B cell (primary cell): ENCODE measurements at regions of chr17 and their contacts with region 1.

Region 1: GRCh38 chr17:73156166-73156840 is 8.5 kb upstream of the SSTR2 start:
- DNase-seq: peak; percentile 61
- ATAC-seq: peak; percentile 67
- H3K4me3 ChIP-seq: no peak overlapping the region
- H3K4me3 Mint-ChIP-seq: no peak overlapping the region
- H3K27ac ChIP-seq: no peak overlapping the region
- H3K27ac Mint-ChIP-seq: no peak overlapping the region
- H3K4me1 ChIP-seq: peaks cover 5 to 13% of the 10 kb centered on the region in 2 donors
- H3K4me1 Mint-ChIP-seq: peaks cover 11% of the 10 kb centered on the region
- H3K27me3 ChIP-seq: peaks cover 0 to 30% (median 8%) of the 10 kb centered on the region in 4 experiments
- H3K27me3 Mint-ChIP-seq: peaks cover 31% of the 10 kb centered on the region
- CTCF ChIP-seq: peak; percentile 84

Region 2: GRCh38 chr17:72556944-72557826 is 599.1 kb before region 1 on chr17:
- CTCF ChIA-PET with region 1: interaction called, 5 read pairs
- POLR2A ChIA-PET with region 1: no interaction called
- intact Hi-C with region 1: loop called (anchors 5 kb)
- DNase-seq: peak; percentile 51
- ATAC-seq: peak; percentile 56
- H3K4me3 ChIP-seq: no peak overlapping the region
- H3K4me3 Mint-ChIP-seq: no peak overlapping the region
- H3K27ac ChIP-seq: no peak overlapping the region
- H3K27ac Mint-ChIP-seq: no peak overlapping the region
- H3K4me1 ChIP-seq: no peaks in the 10 kb centered on the region
- H3K4me1 Mint-ChIP-seq: no peaks in the 10 kb centered on the region
- H3K27me3 ChIP-seq: no peaks in the 10 kb centered on the region
- H3K27me3 Mint-ChIP-seq: peaks cover 4% of the 10 kb centered on the region
- CTCF ChIP-seq: peak; percentile 74

Region 3: DNA sequence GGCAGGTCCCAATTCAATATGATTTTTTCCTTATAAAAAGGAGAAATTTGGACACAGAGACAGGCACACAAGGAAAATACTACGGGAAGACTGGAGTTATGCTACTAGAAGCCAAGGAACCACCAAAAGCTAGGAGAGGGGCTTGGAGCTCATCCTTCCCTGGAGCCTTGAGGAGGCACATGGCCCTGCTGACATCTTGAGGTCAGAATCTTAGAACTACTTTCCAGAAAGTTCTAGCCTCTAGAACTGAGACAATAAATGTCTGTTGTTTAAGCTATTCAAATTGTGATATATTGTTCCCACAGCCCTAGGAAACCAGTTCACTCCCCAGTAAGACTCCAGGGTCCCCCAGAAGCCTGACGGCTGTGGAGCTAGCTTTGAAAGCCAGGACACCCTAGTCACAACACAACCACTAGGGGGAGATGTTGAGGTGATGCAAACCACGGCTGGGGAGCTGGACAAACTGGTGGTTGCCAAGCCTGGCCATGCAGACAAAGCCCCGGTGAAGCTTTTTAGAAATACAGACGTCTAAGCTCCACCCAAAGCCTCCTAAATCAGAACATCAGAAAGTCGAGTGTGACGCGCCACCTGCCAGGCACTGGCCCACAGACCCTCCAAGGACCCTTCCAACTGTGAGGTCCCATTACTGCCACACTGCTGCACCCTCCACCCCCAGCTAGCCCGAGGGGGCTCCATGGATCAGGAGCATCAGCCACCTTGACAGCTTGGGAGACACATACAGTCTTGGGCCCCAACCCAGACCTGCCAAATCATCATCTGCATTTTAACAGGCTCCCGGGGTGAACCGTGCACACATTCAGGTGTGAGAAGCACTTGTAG is 170.2 kb before region 1 on chr17:
- CTCF ChIA-PET with region 1: interaction called, 32 read pairs
- POLR2A ChIA-PET with region 1: no interaction called
- intact Hi-C with region 1: loop called (anchors 1 kb)
- DNase-seq: peak; percentile 59
- ATAC-seq: no peak
- H3K4me3 ChIP-seq: no peak overlapping the region
- H3K4me3 Mint-ChIP-seq: no peak overlapping the region
- H3K27ac ChIP-seq: no peak overlapping the region
- H3K27ac Mint-ChIP-seq: no peak overlapping the region
- H3K4me1 ChIP-seq: peaks cover 0 to 4% of the 10 kb centered on the region in 2 donors
- H3K4me1 Mint-ChIP-seq: peaks cover 3% of the 10 kb centered on the region
- H3K27me3 ChIP-seq: no peaks in the 10 kb centered on the region
- H3K27me3 Mint-ChIP-seq: no peaks in the 10 kb centered on the region
- CTCF ChIP-seq: peak; percentile 71

Region 4: GRCh38 chr17:73118951-73119391 is 37.3 kb before region 1 on chr17:
- CTCF ChIA-PET with region 1: no interaction called
- POLR2A ChIA-PET with region 1: no interaction called
- intact Hi-C with region 1: no loop called
- DNase-seq: no peak
- ATAC-seq: no peak
- H3K4me3 ChIP-seq: no peak overlapping the region
- H3K4me3 Mint-ChIP-seq: no peak overlapping the region
- H3K27ac ChIP-seq: no peak overlapping the region
- H3K27ac Mint-ChIP-seq: no peak overlapping the region
- H3K4me1 ChIP-seq: no peaks in the 10 kb centered on the region
- H3K4me1 Mint-ChIP-seq: no peaks in the 10 kb centered on the region
- H3K27me3 ChIP-seq: no peaks in the 10 kb centered on the region
- H3K27me3 Mint-ChIP-seq: peaks cover 12% of the 10 kb centered on the region
- CTCF ChIP-seq: no peak